Posterior cingulate gyrus (tissue), 11 donors: ENCODE measurements at regions of chr3 and their contacts with region 1.

Region 1: DNA sequence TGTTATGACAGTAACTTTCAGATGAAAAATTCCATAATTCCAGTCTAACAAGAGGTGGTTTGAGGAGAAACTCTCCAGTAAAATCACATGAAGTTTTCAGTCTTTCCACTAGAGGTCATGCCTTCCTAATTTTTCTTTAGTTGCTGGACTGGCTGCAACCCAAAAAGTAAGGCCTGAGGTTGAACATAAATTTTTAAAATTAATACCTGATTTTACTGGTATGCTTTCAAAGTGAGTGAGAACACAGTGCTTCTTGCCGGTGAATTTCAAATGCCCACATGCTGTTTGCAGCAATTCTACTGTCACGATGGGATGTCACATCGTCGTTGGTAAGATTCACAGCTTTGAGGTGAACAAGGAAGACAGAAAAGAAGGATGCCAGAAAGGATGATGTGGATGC is 89.0 kb upstream of the FGF12 start:
- DNase-seq: no peak

Region 2: DNA sequence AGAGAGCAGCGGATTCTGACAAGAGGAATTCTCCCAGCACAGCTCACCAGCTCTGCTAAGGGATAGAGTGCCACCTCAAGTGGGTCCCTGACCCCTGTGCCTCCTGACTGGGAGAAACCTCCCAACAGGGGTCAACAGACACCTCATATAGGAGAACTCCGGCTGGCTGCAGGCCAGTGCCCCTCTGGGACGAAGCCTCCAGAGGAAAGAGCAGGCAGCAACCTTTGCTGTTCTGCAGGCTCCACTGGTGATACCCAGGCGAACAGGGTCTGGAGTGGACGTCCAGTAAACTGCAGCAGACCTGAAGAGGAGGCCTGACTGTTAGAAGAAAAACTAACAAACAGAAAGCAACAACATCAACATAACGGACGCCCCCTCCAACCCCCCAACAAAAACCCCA is 57.7 kb before region 1 on chr3:
- intact Hi-C with region 1: no loop called
- DNase-seq: peak in 1 of 10 donors; percentile 76

Region 3: GRCh38 chr3:193040836-193041672 is 224.7 kb after region 1 on chr3:
- intact Hi-C with region 1: loop called (anchors 2 kb)
- DNase-seq: no peak

Region 4: GRCh38 chr3:193464889-193465288 is 648.5 kb after region 1 on chr3:
- intact Hi-C with region 1: loop called (anchors 5 kb)
- DNase-seq: no peak